Head of caudate nucleus (tissue), 42 donors: ENCODE measurements at regions of chr6 and their contacts with region 1.

Region 1: DNA sequence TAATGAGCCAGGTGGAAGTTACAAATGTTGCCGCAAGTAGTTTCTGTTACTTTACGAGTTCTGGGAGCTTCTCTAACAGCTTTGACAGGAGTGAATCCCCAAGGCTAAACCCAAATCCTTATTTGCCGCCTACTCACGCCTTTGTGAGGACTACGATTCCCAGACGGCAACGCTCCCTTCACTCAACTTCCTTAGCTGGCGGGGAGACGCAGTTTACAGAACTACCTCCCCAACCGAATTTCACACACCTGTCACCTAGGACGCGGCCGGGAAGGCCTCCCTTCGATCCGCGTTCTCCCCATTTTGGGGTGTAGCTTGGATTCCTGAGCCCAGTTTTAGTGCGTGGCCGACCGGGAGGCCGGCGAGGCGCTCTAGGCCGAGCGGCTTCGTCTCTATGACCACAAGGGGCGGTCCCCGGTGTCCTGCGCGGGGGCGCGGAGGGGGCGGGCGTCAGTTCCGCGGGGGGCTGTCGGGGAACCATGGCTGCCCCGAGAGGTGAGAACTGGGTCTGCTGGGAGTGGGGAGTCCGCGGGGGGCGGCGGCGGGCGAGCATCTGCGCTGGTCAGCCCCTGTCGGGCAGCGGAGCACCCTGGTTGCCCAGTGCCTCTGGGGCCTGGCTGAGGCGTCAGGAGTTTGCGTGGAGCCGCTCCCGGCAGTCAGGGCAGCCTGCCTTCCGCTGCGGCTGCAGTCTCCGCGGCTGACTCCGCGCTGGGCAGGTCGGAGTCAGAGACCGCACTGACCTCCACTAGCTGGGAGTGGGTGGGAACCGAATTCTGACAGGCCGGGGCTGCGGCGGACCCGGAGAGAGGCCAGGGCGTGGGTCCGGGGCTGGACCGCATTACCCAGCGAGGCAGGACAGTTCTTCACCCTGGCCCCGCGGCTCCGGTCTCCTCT is at the start of gene SLC35A1:
- DNase-seq: peak; percentile 72 to 95 (median 90)

Region 2: DNA sequence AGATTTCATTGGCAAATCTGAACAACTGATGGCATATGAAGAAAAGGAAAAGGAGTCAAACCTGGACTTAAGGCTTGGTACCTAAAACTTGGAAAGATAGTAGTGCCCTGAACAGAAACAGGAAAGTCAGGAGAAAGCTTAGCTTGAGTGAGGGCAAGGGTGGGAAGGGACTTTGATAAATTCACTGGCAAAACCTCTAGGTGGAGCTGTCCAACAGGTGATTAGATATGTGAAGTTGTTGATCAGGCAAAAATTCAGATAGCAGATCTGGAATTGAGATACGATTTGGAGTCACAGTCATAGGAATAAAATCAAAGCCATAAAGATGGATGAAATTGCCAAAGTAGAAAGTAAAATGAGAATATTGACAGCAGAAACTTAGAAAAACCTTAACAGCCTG is 333.5 kb before region 1 on chr6:
- intact Hi-C with region 1: no loop called
- DNase-seq: peak in 15 of 42 donors; percentile 7 to 73 (median 32)

Region 3: DNA sequence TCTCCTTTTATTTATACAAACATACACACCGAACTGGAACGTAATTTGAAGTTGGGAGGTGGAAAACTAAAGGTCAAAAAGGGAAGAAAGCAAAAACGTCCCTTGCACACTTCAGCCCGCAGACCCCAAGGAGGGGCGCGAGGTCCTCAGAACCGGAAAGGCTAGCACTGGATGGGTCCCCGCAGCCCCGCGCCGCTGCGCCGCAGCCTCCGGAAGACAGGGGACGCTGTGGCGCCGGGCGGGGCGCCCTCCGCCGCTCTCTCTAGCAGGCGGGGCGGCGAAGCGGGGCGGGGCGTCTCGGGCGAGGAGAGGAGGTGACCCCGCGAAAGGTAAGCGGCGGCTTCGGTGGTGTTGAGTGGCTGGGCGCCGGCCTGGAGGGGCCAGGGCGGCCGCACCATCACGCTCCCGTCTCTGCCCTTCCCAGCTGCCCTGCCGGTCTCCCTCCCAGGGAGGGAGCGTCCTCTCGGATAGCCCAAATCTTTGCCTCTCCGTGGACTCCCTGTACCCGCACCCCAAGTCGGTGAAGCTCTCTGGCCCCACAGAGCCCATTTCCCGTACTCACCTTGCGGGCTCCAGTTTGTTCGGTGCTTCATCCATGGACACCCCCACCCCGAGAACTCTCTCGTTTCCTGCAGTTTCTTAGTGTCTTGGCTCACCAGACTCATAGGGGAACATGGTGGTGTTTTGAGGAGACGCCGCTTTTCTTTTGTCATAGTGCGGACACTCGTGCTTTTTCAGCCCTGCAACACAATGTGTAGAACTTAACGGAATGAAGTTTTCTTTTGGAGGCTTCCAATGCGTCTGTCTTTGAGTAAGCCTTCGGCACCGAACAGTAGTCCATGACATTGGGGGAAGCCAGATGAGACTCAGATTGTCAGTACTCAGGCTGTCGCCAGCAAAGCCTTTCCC is 150.2 kb before region 1 on chr6 and contains the start of gene SMIM8:
- intact Hi-C with region 1: loop called (anchors 5 kb)
- DNase-seq: peak; percentile 48 to 93 (median 84)

Region 4: DNA sequence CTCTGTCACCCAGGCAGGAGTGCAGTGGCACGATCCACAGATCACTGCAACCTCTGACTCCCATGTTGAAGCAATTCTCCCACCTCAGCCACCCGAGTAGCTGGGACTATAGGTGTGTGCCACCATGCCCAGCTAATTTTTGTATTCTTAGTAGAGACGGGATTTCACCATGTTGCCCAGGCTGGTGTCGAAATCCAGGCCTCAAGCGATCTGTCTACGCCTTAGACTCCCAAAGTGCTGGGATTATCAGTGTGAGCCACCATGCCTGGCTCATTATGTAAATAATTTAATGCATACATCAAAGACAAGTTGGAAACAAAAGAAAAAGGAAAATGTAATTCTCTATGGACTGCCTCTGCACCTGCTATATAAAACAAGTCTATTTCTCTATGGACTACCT is 58.4 kb before region 1 on chr6:
- intact Hi-C with region 1: loop called (anchors 5 kb)
- DNase-seq: no peak

Region 5: GRCh38 chr6:87483929-87484328 is 11.2 kb after region 1 on chr6:
- intact Hi-C with region 1: no loop called
- DNase-seq: peak in 1 of 42 donors; percentile 6